Naive thymus-derived CD4-positive, alpha-beta T cell (primary cell): ENCODE measurements at regions of chr5 and their contacts with region 1.

Region 1: GRCh38 chr5:54867310-54867944 is 118.0 kb downstream of the ESM1 start:
- DNase-seq: peak in 7 of 9 donors; percentile 38 to 66 (median 59)
- ATAC-seq: peak; percentile 83
- H3K4me3 ChIP-seq: peak overlapping the region; percentile 33
- H3K4me3 Mint-ChIP-seq: peak overlapping the region; percentile 2 to 80 (median 52)
- H3K27ac ChIP-seq: no peak overlapping the region
- H3K27ac Mint-ChIP-seq: peak overlapping the region in 4 of 9 donors; percentile 44 to 60 (median 52)
- H3K4me1 ChIP-seq: no peaks in the 10 kb centered on the region
- H3K4me1 Mint-ChIP-seq: peaks cover 0 to 20% (median 9%) of the 10 kb centered on the region in 7 donors
- H3K27me3 ChIP-seq: no peaks in the 10 kb centered on the region
- H3K27me3 Mint-ChIP-seq: peaks cover 0 to 69% (median 11%) of the 10 kb centered on the region in 5 donors

Region 2: GRCh38 chr5:54243473-54244080 is 623.9 kb before region 1 on chr5:
- CTCF ChIA-PET with region 1: interaction called, 7 read pairs
- POLR2A ChIA-PET with region 1: no interaction called
- intact Hi-C with region 1: loop called (anchors 1 kb)
- DNase-seq: peak in 6 of 9 donors; percentile 10 to 45 (median 36)
- ATAC-seq: peak; percentile 54
- H3K4me3 ChIP-seq: no peak overlapping the region
- H3K4me3 Mint-ChIP-seq: no peak overlapping the region
- H3K27ac ChIP-seq: no peak overlapping the region
- H3K27ac Mint-ChIP-seq: no peak overlapping the region
- H3K4me1 ChIP-seq: no peaks in the 10 kb centered on the region
- H3K4me1 Mint-ChIP-seq: peaks cover 0 to 22% (median 14%) of the 10 kb centered on the region in 7 donors
- H3K27me3 ChIP-seq: no peaks in the 10 kb centered on the region
- H3K27me3 Mint-ChIP-seq: peaks cover 0 to 10% (median 0%) of the 10 kb centered on the region in 5 donors

Region 3: DNA sequence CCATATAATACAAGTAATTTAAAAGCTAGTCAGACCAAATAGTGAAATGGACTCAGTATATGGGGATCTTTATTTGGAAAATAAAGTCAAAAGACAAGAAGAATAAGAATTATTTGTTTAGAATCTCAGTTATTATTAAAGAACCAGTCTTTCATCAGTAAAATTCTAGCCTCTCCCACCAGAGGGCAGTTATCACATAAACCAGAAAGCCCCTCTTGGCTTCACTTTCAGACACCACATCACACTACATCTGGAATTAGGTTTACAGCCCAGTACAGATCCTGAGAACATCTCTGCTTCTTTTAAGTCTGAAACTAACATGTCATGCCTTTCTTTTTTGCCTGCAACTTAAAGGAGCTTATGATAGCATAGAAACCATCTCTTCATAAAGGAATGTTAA is 424.2 kb before region 1 on chr5:
- CTCF ChIA-PET with region 1: interaction called, 5 read pairs
- POLR2A ChIA-PET with region 1: no interaction called
- intact Hi-C with region 1: loop called in 1 of 2 experiments (anchors 1 kb)
- DNase-seq: no peak
- ATAC-seq: no peak
- H3K4me3 ChIP-seq: no peak overlapping the region
- H3K4me3 Mint-ChIP-seq: no peak overlapping the region
- H3K27ac ChIP-seq: no peak overlapping the region
- H3K27ac Mint-ChIP-seq: peak overlapping the region in 1 of 9 donors; percentile 22
- H3K4me1 ChIP-seq: peaks cover 0 to 18% of the 10 kb centered on the region in 2 donors
- H3K4me1 Mint-ChIP-seq: peaks cover 9 to 39% (median 36%) of the 10 kb centered on the region in 7 donors
- H3K27me3 ChIP-seq: no peaks in the 10 kb centered on the region
- H3K27me3 Mint-ChIP-seq: peaks cover 0 to 3% (median 0%) of the 10 kb centered on the region in 5 donors

Region 4: DNA sequence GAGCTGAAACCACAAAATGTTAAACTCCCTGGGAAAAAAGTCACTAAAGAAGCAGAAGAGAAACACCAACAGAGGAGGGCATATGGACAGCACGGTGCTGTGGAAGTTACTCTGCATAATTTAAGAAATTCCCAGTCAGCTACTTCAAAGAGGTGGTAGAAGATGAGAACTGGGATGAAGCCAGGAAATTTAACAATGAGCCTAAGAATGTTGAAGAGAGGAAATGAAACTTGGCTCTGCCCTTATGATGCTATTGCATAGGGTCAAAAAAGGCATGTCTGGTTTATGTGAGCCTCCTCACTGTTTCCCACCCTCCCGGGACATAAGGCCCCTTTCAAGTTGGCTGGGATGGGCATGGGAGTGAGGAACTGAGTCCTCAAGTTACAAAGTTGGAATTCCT is 375.2 kb before region 1 on chr5:
- CTCF ChIA-PET with region 1: interaction called, 9 read pairs
- POLR2A ChIA-PET with region 1: no interaction called
- intact Hi-C with region 1: loop called in 1 of 2 experiments (anchors 1 kb)
- DNase-seq: no peak
- ATAC-seq: no peak
- H3K4me3 ChIP-seq: no peak overlapping the region
- H3K4me3 Mint-ChIP-seq: no peak overlapping the region
- H3K27ac ChIP-seq: no peak overlapping the region
- H3K27ac Mint-ChIP-seq: no peak overlapping the region
- H3K4me1 ChIP-seq: no peaks in the 10 kb centered on the region
- H3K4me1 Mint-ChIP-seq: no peaks in the 10 kb centered on the region
- H3K27me3 ChIP-seq: no peaks in the 10 kb centered on the region
- H3K27me3 Mint-ChIP-seq: peaks cover 0 to 19% (median 4%) of the 10 kb centered on the region in 5 donors

Region 5: DNA sequence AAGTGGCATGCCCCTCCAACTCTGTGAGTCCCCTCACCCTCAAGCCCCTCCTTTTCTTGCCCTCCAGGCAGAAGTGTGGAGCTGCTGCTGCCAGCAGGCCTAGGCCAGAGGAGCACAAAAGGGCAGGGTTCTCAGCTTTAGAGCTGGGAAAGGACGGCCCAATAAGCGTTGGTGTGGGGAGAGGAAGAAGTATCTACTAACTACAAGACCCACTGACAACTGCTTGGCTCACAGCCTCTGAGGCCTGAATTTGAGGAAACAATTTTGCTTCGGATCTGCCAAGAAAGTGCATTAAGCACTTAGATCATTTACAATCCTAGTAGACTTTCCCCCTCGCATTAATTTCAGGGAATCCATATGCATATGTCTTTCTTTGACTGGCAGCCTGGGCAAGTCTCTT is 170.5 kb before region 1 on chr5:
- CTCF ChIA-PET with region 1: no interaction called
- POLR2A ChIA-PET with region 1: no interaction called
- intact Hi-C with region 1: no loop called
- DNase-seq: no peak
- ATAC-seq: no peak
- H3K4me3 ChIP-seq: no peak overlapping the region
- H3K4me3 Mint-ChIP-seq: no peak overlapping the region
- H3K27ac ChIP-seq: no peak overlapping the region
- H3K27ac Mint-ChIP-seq: no peak overlapping the region
- H3K4me1 ChIP-seq: no peaks in the 10 kb centered on the region
- H3K4me1 Mint-ChIP-seq: peaks cover 0 to 6% (median 0%) of the 10 kb centered on the region in 7 donors
- H3K27me3 ChIP-seq: no peaks in the 10 kb centered on the region
- H3K27me3 Mint-ChIP-seq: peaks cover 0 to 3% (median 0%) of the 10 kb centered on the region in 5 donors

Region 6: GRCh38 chr5:55146543-55147151 is 279.2 kb after region 1 on chr5:
- CTCF ChIA-PET with region 1: no interaction called
- POLR2A ChIA-PET with region 1: no interaction called
- intact Hi-C with region 1: loop called in 1 of 2 experiments (anchors 1 kb)
- DNase-seq: peak; percentile 47 to 84 (median 77)
- ATAC-seq: peak; percentile 91
- H3K4me3 ChIP-seq: no peak overlapping the region
- H3K4me3 Mint-ChIP-seq: peak overlapping the region in 7 of 10 donors; percentile 21 to 74 (median 42)
- H3K27ac ChIP-seq: no peak overlapping the region
- H3K27ac Mint-ChIP-seq: peak overlapping the region in 6 of 9 donors; percentile 1 to 60 (median 27)
- H3K4me1 ChIP-seq: peaks cover 5 to 14% of the 10 kb centered on the region in 2 donors
- H3K4me1 Mint-ChIP-seq: peaks cover 12 to 38% (median 20%) of the 10 kb centered on the region in 7 donors
- H3K27me3 ChIP-seq: no peaks in the 10 kb centered on the region
- H3K27me3 Mint-ChIP-seq: peaks cover 0 to 62% (median 0%) of the 10 kb centered on the region in 5 donors

Region 7: DNA sequence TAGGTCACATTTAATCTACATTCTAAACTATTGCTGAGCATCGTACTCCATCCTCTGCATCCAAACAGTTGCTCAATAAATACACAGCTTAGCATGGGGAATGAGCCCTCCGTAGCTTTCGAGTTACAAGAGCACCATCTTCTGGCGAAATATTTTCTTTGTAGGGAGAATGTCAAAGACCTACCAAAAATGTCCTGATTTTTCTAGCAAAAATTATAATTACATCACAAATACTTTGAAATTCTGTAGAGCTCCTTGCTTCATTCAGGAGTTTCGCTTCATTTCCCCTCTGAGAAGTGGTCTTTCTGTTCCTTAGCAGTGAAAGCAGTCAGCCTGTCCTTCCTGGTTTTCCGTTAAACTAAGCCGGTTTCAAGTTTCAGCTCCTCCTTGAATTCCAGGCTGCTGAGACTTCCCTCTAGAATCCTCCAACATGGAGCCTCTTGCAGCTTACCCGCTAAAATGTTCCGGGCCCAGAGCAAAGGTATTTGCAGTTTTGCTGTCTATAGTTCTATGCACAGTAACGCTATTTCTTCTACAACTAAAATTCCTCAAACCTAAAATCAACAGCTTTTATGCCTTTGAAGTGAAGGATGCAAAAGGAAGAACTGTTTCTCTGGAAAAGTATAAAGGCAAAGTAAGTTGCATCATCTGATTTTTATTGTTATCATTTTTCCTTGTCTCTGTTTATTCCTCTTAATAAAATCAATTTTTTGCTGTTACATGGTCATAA is 292.5 kb after region 1 on chr5 and contains the start of gene GPX8:
- CTCF ChIA-PET with region 1: interaction called, 5 read pairs
- POLR2A ChIA-PET with region 1: no interaction called
- intact Hi-C with region 1: loop called (anchors 1 kb)
- DNase-seq: peak in 7 of 9 donors; percentile 27 to 65 (median 54)
- ATAC-seq: peak; percentile 75
- H3K4me3 ChIP-seq: no peak within 1 kb of the TSS
- H3K4me3 Mint-ChIP-seq: no peak within 1 kb of the TSS
- H3K27ac ChIP-seq: no peak within 1 kb of the TSS
- H3K27ac Mint-ChIP-seq: no peak within 1 kb of the TSS
- H3K4me1 ChIP-seq: no peaks in the 10 kb centered on the region
- H3K4me1 Mint-ChIP-seq: peaks cover 0 to 9% (median 0%) of the 10 kb centered on the region in 7 donors
- H3K27me3 ChIP-seq: no peaks in the 10 kb centered on the region
- H3K27me3 Mint-ChIP-seq: peaks cover 6 to 75% (median 29%) of the 10 kb centered on the region in 5 donors
- total RNA-seq, gene GPX8: not detected